ENCODE measurements at regions of chr1 and their contacts with region 1.

Region 1: DNA sequence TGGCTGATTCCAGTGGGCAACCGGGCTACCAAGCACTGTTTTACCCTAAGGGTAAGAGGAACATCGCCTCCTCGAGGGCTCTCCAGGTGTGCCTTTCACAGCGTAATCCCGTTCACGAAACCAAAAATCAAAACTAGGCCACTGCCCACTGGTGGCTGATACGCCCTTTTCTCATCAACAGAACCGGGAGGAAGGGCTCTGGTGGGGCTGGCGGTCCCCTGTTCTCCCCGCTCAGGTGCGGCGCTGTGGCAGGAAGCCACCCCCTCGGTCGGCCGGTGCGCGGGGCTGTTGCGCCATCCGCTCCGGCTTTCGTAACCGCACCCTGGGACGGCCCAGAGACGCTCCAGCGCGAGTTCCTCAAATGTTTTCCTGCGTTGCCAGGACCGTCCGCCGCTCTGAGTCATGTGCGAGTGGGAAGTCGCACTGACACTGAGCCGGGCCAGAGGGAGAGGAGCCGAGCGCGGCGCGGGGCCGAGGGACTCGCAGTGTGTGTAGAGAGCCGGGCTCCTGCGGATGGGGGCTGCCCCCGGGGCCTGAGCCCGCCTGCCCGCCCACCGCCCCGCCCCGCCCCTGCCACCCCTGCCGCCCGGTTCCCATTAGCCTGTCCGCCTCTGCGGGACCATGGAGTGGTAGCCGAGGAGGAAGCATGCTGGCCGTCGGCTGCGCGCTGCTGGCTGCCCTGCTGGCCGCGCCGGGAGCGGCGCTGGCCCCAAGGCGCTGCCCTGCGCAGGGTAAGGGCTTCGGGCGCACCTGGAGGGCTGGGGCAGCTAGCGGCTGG is at the start of gene IL6R:
- DNase-seq: peak; percentile 86
- H3K4me3 Mint-ChIP-seq: peak within 1 kb of the TSS; percentile 92
- H3K27ac Mint-ChIP-seq: peak within 1 kb of the TSS; percentile 93
- H3K4me1 Mint-ChIP-seq: peaks cover 82% of the 10 kb centered on the region
- H3K27me3 Mint-ChIP-seq: no peaks in the 10 kb centered on the region
- total RNA-seq, gene IL6R: 30.2 to 30.5 TPM

Region 2: DNA sequence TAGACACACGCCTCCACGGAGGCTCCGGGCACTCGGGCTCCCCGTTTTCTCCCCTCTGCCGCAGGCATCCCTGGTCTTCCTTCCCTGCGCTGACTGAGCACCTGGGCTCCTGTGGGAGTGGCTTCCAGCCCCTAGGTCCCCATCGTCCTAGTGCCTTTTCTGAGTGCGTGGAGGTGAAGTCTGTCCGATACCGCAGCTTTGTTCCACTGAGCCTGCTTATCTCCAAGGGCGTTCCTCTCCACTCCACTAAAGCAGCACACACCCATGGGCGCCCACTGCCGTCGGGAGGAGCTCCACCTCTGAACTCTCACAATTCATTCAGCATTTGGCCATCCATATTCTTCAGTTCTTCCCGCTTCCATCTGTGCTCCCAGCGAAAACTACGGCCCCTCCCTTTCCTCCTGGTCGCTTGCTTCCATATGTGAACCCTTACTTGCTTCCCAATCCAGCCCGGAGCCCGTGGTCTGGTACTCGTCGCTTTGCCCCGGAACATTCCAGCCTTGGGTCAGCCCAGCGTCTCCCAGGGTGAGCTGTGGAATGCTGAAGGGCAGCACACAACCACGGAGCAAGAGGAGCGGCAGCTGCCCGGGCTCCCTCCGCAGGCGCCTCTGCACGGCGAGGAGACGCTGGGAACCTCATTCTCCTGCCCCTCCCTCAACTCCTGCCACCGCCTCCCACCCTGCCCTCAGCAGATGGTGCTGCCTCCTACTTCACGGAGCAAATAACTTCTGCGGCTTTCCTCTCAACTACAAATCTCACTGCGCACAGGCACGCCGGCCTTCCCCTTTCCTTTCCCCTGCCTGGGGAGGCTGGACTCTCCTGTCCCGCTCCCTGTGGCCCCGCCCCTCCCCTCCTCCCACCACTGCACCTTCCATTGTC is 52.4 kb before region 1 on chr1:
- CTCF ChIA-PET with region 1: interaction called, 5 read pairs
- POLR2A ChIA-PET with region 1: interaction called, 3 read pairs
- intact Hi-C with region 1: loop called (anchors 1 kb)
- DNase-seq: peak; percentile 81
- H3K4me3 Mint-ChIP-seq: peak overlapping the region; percentile 72
- H3K27ac Mint-ChIP-seq: peak overlapping the region; percentile 82
- H3K4me1 Mint-ChIP-seq: peaks cover 41% of the 10 kb centered on the region
- H3K27me3 Mint-ChIP-seq: no peaks in the 10 kb centered on the region

Region 3: DNA sequence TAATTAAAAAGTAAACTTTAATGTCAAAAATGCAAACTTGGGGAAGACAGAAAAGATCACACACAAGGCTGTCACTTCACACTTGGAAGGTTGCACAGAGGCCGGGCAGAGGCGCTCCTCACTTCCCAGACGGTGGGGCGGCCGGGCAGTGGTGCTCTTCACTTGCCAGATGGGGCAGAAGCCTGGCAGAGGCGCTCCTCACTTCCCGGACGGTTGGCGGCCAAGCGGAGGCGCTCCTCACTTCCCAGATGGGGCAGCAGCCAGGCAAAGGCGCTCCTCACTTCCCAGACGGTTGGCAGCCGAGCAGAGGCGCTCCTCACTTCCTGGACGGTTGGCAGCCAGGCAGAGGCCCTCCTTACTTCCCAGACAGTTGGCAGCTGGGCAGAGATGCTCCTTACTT is 25.9 kb before region 1 on chr1:
- CTCF ChIA-PET with region 1: no interaction called
- POLR2A ChIA-PET with region 1: no interaction called
- intact Hi-C with region 1: no loop called
- DNase-seq: no peak
- H3K4me3 Mint-ChIP-seq: no peak overlapping the region
- H3K27ac Mint-ChIP-seq: no peak overlapping the region
- H3K4me1 Mint-ChIP-seq: peaks cover 2% of the 10 kb centered on the region
- H3K27me3 Mint-ChIP-seq: no peaks in the 10 kb centered on the region

Region 4: DNA sequence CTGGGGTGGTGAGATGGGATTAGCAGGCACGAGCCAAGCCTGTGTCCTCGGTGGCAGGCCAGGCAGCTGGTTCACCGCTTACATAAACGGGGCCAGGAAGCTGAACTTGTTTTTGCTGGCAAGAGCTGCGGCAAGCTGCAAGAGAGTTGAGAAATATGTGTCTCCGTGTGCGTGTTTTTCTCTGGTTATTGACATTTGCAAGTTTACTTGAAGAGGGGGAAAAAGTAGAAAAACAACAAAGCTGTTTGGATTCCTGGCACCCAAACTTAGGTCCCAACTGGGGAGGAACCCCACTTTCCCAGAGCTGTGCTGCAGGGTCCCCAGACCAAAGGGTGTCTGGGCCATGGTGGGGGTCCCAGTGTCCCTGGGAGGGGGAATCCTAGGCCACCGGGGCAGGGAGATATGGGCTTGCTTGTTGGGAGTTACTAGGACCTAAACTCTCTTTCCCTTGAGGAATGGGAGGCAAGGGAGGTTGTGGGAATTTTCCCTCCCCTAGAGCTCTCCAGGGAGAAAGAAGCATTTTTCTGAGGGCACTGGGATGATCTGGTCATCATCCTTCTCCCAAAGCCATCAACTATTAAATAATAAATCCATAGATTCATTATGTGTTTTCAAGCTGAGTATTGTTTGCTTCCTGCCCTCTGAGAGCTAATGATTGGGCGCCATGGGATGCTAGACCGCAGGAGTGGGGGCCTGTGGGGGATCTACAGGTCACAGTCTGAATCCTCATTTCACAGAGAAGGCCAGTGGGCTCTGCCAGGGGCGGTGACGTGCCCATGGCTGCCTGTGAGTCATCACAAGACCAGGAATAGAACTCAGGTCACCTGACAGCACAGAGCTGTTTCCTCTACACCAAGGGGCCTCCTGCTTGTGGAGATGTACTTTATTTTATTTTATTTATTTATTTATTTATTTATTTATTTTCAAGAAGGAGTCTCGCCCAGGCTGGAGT is 14.7 kb after region 1 on chr1:
- CTCF ChIA-PET with region 1: interaction called, 14 read pairs
- POLR2A ChIA-PET with region 1: interaction called, 15 read pairs
- intact Hi-C with region 1: loop called (anchors 1 kb)
- DNase-seq: peak; percentile 88
- H3K4me3 Mint-ChIP-seq: peak overlapping the region; percentile 54
- H3K27ac Mint-ChIP-seq: peak overlapping the region; percentile 89
- H3K4me1 Mint-ChIP-seq: peaks cover 87% of the 10 kb centered on the region
- H3K27me3 Mint-ChIP-seq: no peaks in the 10 kb centered on the region

Region 5: DNA sequence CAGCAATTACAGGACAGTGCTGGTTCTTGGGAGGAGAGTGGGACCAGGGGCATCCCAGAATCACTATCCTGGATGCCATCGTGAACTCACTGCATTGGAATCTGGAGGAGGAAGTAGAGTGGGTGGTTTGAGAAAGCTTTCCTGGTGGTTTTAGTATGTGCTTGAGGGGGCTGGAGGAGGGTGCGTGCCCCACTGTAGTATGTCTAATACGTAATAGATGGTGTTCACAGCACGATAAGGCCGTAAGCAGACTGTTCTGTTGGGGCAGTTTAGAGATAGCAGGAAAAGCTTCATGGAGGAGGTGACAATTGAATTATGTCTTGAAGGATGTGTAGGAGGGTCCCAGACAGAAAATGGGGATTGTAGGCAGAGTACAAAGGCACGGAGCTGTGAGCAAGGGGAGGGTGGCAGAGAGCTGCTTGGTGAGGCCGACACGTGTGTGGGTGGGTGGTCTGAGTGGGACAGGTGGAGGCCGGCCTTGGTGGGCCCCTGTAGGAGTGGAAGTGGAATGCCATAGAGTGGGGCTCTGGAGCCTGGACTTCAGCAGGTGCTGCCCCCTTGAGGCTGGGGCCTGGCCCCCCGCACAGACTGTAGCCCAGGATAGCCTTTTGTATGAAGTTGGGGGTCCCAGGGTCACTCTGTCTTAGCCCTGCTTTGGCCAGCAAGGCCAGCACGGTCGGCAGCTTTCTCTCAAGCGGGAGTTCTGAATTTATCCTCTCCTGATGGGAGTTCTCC is 37.0 kb after region 1 on chr1:
- CTCF ChIA-PET with region 1: interaction called, 3 read pairs
- POLR2A ChIA-PET with region 1: interaction called, 15 read pairs
- intact Hi-C with region 1: loop called (anchors 1 kb)
- DNase-seq: no peak
- H3K4me3 Mint-ChIP-seq: no peak overlapping the region
- H3K27ac Mint-ChIP-seq: peak overlapping the region; percentile 61
- H3K4me1 Mint-ChIP-seq: peaks cover 71% of the 10 kb centered on the region
- H3K27me3 Mint-ChIP-seq: no peaks in the 10 kb centered on the region

Region 6: GRCh38 chr1:154479764-154480421 is 74.7 kb after region 1 on chr1:
- CTCF ChIA-PET with region 1: interaction called, 13 read pairs
- POLR2A ChIA-PET with region 1: no interaction called
- intact Hi-C with region 1: no loop called
- DNase-seq: peak; percentile 71
- H3K4me3 Mint-ChIP-seq: no peak overlapping the region
- H3K27ac Mint-ChIP-seq: peak overlapping the region; percentile 11
- H3K4me1 Mint-ChIP-seq: peaks cover 27% of the 10 kb centered on the region
- H3K27me3 Mint-ChIP-seq: no peaks in the 10 kb centered on the region

Measured in activated CD4-positive, alpha-beta memory T cell treated with anti-CD3 and anti-CD28 coated beads for 36 hours (primary cell).